Calu3 (cell line): ENCODE measurements at regions of chr14 and their contacts with region 1.

Region 1: DNA sequence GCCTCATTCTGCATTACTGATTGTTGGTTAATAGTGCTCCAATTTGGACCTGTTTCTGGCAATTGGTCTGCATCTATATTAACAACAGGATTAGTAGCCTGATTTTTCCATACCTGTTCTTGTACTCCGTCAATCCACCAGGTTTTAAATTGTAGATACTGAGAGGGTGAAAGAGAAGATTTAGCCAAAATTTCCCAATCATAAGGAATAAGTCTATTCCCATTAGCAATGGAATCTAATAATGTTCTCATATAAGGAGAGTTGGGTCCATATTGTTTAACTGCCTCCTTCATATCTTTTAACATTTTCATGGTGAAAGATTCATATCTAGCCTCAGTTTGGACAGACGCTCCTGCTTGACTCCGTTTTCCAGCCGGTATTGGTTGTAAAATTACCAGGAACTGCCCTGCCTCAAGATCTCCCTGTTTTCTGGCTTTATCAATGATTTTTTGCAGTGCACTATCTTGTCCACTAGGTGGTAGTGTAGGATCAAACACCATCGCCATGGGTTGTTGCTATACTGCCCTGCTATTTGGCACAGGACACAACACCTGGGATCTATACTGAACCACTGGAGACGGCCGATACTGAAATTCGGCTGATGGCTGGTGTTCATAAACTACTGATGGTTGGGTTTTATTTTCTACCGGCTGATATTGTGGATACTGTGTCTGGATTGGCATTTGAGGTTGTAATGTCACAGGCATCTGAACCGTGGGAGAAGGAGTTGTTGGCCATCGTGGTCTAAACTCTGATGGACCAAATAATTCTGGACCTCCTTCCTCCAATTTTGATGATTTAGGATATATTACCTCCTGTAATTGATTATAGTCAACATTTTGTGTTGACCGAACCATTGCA is 25.2 kb downstream of the DHRS4L2 start:
- DNase-seq: peak; percentile 64
- H3K4me3 Mint-ChIP-seq: no peak overlapping the region
- H3K27ac Mint-ChIP-seq: no peak overlapping the region
- H3K4me1 Mint-ChIP-seq: no peaks in the 10 kb centered on the region
- H3K27me3 Mint-ChIP-seq: peaks cover 43% of the 10 kb centered on the region
- CTCF ChIP-seq: peak; percentile 64

Region 2: GRCh38 chr14:24036169-24036962 is 22.5 kb after region 1 on chr14:
- CTCF ChIA-PET with region 1: no interaction called
- intact Hi-C with region 1: loop called (anchors 1 kb)
- DNase-seq: peak; percentile 80
- H3K4me3 Mint-ChIP-seq: peak overlapping the region; percentile 88
- H3K27ac Mint-ChIP-seq: peak overlapping the region; percentile 70
- H3K4me1 Mint-ChIP-seq: no peaks in the 10 kb centered on the region
- H3K27me3 Mint-ChIP-seq: peaks cover 3% of the 10 kb centered on the region
- CTCF ChIP-seq: no peak